H1 (cell line): ENCODE measurements at regions of chr14 and their contacts with region 1.

Region 1: DNA sequence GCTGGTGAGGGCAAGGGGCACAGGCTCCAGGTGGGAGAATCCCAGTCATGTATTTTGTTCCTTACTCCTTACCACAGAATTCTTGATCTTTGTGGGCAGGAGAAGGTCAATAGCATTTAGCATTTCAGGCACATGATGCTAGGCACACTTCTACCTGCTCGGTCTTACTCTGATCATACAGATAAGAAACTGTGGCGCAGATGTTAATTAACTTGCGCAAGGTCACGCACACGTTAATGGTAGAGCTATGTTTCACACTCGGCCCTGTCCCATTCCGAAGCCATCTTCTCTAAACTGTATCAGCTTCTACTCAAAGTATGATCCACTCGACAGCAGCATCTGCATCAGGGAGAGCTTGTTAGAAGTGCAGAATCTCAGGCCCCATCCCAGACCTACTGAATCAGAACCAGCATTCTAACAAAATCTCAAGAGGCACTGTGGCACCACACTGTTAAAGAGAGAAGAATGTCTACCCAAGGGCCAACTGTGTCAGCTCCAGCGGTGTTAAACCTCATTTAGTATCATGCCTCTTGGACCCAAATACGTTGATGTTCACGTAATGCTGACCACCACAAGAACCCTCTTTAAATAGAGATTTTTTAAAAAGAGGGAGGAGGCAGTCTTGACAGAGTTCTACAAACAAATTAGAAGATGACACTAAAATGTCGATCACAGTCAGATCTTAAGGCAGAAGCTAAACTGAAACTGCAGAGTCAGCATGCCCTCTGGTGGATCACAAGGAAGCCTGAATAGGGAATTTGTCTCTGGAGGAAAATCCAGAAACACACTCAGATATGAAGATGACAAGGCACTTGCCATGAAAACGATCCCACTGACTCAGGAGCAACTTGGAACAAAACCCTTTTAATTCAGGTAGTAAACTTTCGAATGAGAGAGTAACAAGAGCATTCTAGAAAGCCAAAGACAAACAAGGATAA is 7.3 kb downstream of the STXBP6 start:
- DNase-seq: no peak
- H3K4me3 ChIP-seq: no peak overlapping the region
- H3K27ac ChIP-seq: no peak overlapping the region
- H3K4me1 ChIP-seq: peaks cover 0 to 2% (median 0%) of the 10 kb centered on the region in 4 experiments; a peak in 1 of 7 replicates
- H3K27me3 ChIP-seq: peaks cover 0 to 3% (median 0%) of the 10 kb centered on the region in 4 experiments; a peak in 2 of 7 replicates
- CTCF ChIP-seq: peak in 2 of 3 experiments; percentile 73 to 87; a peak in 3 of 4 replicates
- EP300 ChIP-seq: no peak
- POLR2A ChIP-seq: no peak
- RAD21 ChIP-seq: peak; percentile 93 to 94

Region 2: GRCh38 chr14:24817212-24818057 is 225.2 kb before region 1 on chr14:
- CTCF ChIA-PET with region 1: interaction called, 10 read pairs
- POLR2A ChIA-PET with region 1: no interaction called
- DNase-seq: no peak
- H3K4me3 ChIP-seq: no peak overlapping the region
- H3K27ac ChIP-seq: no peak overlapping the region
- H3K4me1 ChIP-seq: no peaks in the 10 kb centered on the region
- H3K27me3 ChIP-seq: no peaks in the 10 kb centered on the region
- CTCF ChIP-seq: peak; percentile 43 to 61 (median 60); a peak in 3 of 4 replicates
- EP300 ChIP-seq: no peak
- POLR2A ChIP-seq: no peak
- RAD21 ChIP-seq: peak; percentile 74 to 77